ENCODE measurements at regions of chr17 and their contacts with region 1.

Region 1: GRCh38 chr17:71649941-71650350 is 470.9 kb upstream of the SOX9 start:
- DNase-seq: no peak
- ATAC-seq: no peak
- H3K4me3 ChIP-seq: no peak overlapping the region
- H3K27ac ChIP-seq: no peak overlapping the region
- H3K4me1 ChIP-seq: no peaks in the 10 kb centered on the region
- H3K27me3 ChIP-seq: no peaks in the 10 kb centered on the region
- CTCF ChIP-seq: no peak
- POLR2A ChIP-seq: no peak

Region 2: DNA sequence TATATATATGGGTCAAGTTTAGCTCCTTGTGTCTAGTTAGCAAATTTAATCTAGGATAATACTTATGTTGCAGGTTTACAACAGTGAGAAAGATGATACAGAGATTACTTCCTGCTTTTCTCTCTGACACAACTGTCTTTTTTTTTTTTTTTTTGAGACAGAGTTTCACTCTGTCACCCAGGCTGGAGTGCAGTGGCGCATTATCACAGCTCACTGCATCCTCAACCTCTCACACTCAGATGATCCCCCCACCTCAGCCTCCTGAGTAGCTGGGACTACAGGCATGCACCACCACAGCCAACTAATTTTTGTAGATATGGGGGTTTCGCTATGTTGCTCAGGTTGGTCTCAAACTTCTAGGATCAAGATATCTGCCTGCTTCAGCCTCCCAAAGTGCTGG is 236.0 kb before region 1 on chr17:
- in situ Hi-C with region 1: no loop called
- intact Hi-C with region 1: no loop called
- DNase-seq: no peak
- ATAC-seq: no peak
- H3K4me3 ChIP-seq: no peak overlapping the region
- H3K27ac ChIP-seq: no peak overlapping the region
- H3K4me1 ChIP-seq: no peaks in the 10 kb centered on the region
- H3K27me3 ChIP-seq: no peaks in the 10 kb centered on the region
- CTCF ChIP-seq: no peak
- POLR2A ChIP-seq: no peak

Region 3: GRCh38 chr17:71572343-71572742 is 77.6 kb before region 1 on chr17:
- in situ Hi-C with region 1: loop called in 1 of 4 experiments (anchors 25 kb)
- intact Hi-C with region 1: no loop called
- DNase-seq: no peak
- ATAC-seq: no peak
- H3K4me3 ChIP-seq: no peak overlapping the region
- H3K27ac ChIP-seq: no peak overlapping the region
- H3K4me1 ChIP-seq: no peaks in the 10 kb centered on the region
- H3K27me3 ChIP-seq: no peaks in the 10 kb centered on the region
- CTCF ChIP-seq: no peak
- POLR2A ChIP-seq: no peak

Region 4: DNA sequence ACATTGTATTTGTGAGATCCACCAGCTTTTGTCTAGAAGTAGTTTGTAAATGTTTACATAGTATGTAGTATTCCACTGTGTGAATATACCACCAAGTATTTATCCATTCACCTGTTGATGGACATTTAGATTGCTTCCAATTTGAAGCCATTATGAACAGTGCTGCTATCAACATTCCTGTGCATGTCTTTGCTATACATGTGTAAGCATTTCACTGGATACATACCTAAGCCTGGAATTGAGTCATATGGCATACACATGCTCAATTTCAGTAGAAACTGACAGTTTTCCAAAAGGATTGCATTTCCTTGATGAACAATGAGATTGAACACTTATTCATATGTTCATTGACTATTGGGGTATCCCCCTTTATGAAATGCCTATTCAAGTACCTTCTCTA is 69.7 kb before region 1 on chr17:
- in situ Hi-C with region 1: loop called in 1 of 4 experiments (anchors 10 kb)
- intact Hi-C with region 1: no loop called
- DNase-seq: no peak
- ATAC-seq: no peak
- H3K4me3 ChIP-seq: no peak overlapping the region
- H3K27ac ChIP-seq: no peak overlapping the region
- H3K4me1 ChIP-seq: no peaks in the 10 kb centered on the region
- H3K27me3 ChIP-seq: no peaks in the 10 kb centered on the region
- CTCF ChIP-seq: no peak
- POLR2A ChIP-seq: no peak

Region 5: GRCh38 chr17:71713846-71714245 is 63.9 kb after region 1 on chr17:
- in situ Hi-C with region 1: no loop called
- intact Hi-C with region 1: no loop called
- DNase-seq: no peak
- ATAC-seq: no peak
- H3K4me3 ChIP-seq: no peak overlapping the region
- H3K27ac ChIP-seq: no peak overlapping the region
- H3K4me1 ChIP-seq: no peaks in the 10 kb centered on the region
- H3K27me3 ChIP-seq: no peaks in the 10 kb centered on the region
- CTCF ChIP-seq: no peak
- POLR2A ChIP-seq: no peak